Common myeloid progenitor, CD34-positive (primary cell): ENCODE measurements at regions of chr15 and their contacts with region 1.

Region 1: GRCh38 chr15:51192521-51193280 is 98.0 kb upstream of the TNFAIP8L3 start:
- DNase-seq: peak; percentile 72 to 78 (median 73)
- H3K4me3 ChIP-seq: no peak overlapping the region
- H3K27ac ChIP-seq: no peak overlapping the region
- H3K4me1 ChIP-seq: peaks cover 0 to 4% (median 0%) of the 10 kb centered on the region in 4 experiments
- H3K27me3 ChIP-seq: peaks cover 0 to 36% (median 17%) of the 10 kb centered on the region in 5 experiments

Region 2: DNA sequence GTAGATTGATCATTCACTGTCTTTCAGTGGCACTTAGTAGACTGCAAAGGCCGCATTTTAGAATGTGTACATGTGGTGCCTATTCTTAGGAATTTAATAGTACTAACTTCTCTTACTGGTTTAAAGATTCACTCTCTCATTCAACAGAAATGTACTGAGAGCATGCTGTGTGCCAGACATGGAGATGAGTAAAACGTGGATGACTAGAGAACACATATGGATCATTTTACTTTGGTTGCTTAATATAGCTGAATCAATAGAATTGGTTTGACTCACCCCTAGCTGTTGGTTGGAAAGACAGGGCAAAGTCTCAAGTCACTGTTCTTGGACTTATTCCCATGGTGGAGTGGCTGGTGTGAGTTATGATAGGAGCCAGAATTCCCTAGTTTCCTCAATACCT is 11.1 kb after region 1 on chr15:
- CTCF ChIA-PET with region 1: interaction called, 10 read pairs
- POLR2A ChIA-PET with region 1: no interaction called
- DNase-seq: no peak
- H3K4me3 ChIP-seq: no peak overlapping the region
- H3K27ac ChIP-seq: no peak overlapping the region
- H3K4me1 ChIP-seq: peaks cover 0 to 2% (median 0%) of the 10 kb centered on the region in 4 experiments
- H3K27me3 ChIP-seq: peaks cover 0 to 8% (median 4%) of the 10 kb centered on the region in 5 experiments